SK-N-SH (cell line): ENCODE measurements at regions of chr20 and their contacts with region 1.

Region 1: DNA sequence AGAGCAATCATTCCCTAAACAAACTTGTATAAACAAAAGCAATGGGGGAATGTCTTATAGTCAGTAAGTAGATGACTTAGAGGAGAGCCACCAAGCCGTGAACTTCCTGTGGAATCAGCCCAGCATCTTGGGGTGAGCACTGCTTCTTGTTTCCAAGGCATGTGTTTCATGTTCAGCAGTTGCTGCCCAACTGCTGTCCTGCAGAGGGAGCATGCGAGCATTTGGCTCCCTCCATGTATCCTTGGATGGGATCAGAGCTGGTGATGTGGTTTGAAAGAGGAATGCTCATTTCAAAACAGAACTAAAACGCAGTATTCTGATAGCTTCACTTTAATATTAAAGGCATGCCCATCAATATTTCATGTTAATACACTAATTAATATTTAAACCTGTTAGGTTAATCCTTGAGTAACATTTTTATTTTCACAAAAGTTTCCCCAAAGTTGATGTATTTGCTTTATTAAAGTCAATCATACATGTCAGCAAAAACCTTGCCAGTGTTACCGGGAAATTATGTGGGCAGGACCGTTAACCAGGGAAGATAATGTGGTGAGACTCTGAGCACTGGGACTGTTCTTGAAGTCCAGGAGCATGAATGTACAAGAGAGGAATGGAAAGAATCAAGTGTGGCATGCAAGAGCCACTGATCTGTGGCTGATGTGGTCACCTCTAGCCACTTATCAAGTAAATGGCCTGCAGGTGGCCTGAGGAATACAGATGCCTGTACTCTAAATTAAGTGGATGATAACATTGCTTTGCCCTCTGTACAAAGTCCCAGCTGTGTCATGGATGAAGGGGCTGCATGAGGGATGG is 172.2 kb upstream of the GGTLC1 start:
- DNase-seq: peak; percentile 59
- H3K4me3 ChIP-seq: no peak overlapping the region
- H3K27ac ChIP-seq: no peak overlapping the region
- H3K4me1 ChIP-seq: no peaks in the 10 kb centered on the region
- H3K27me3 ChIP-seq: no peaks in the 10 kb centered on the region
- CTCF ChIP-seq: peak; percentile 73
- EP300 ChIP-seq: no peak
- RAD21 ChIP-seq: peak; percentile 65

Region 2: GRCh38 chr20:24086121-24086520 is 74.6 kb before region 1 on chr20:
- CTCF ChIA-PET with region 1: no interaction called
- POLR2A ChIA-PET with region 1: no interaction called
- DNase-seq: no peak
- H3K4me3 ChIP-seq: no peak overlapping the region
- H3K27ac ChIP-seq: no peak overlapping the region
- H3K4me1 ChIP-seq: no peaks in the 10 kb centered on the region
- H3K27me3 ChIP-seq: peaks cover 9% of the 10 kb centered on the region; the same call in 1 of the 2 replicates
- CTCF ChIP-seq: no peak
- EP300 ChIP-seq: no peak
- RAD21 ChIP-seq: no peak

Region 3: GRCh38 chr20:24149881-24150307 is 10.9 kb before region 1 on chr20:
- CTCF ChIA-PET with region 1: interaction called, 53 read pairs
- POLR2A ChIA-PET with region 1: no interaction called
- DNase-seq: peak; percentile 55
- H3K4me3 ChIP-seq: no peak overlapping the region
- H3K27ac ChIP-seq: no peak overlapping the region
- H3K4me1 ChIP-seq: no peaks in the 10 kb centered on the region
- H3K27me3 ChIP-seq: no peaks in the 10 kb centered on the region
- CTCF ChIP-seq: peak; percentile 50
- EP300 ChIP-seq: no peak
- RAD21 ChIP-seq: peak; percentile 40

Region 4: DNA sequence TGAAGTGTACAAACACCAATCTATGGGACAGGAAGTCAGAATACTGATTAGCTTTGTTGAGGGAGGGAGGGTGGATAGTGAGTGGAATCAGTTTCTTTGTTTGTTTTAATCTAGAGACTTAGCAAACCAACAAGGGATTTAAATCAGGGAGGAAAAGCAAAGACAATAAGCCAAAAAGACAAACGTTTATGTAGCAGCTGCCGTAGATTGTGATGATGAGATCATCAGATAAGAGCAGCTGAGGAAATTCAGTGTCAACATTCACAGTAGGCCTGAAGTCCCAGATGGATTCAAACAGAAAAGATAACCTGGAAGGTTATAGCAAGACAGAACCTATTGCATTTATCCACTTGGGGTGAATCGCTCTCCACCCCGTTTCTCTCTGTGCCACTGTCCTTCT is 203.7 kb after region 1 on chr20:
- CTCF ChIA-PET with region 1: no interaction called
- POLR2A ChIA-PET with region 1: no interaction called
- DNase-seq: no peak
- H3K4me3 ChIP-seq: no peak overlapping the region
- H3K27ac ChIP-seq: no peak overlapping the region
- H3K4me1 ChIP-seq: no peaks in the 10 kb centered on the region
- H3K27me3 ChIP-seq: no peaks in the 10 kb centered on the region
- CTCF ChIP-seq: no peak
- EP300 ChIP-seq: no peak
- RAD21 ChIP-seq: no peak

Region 5: DNA sequence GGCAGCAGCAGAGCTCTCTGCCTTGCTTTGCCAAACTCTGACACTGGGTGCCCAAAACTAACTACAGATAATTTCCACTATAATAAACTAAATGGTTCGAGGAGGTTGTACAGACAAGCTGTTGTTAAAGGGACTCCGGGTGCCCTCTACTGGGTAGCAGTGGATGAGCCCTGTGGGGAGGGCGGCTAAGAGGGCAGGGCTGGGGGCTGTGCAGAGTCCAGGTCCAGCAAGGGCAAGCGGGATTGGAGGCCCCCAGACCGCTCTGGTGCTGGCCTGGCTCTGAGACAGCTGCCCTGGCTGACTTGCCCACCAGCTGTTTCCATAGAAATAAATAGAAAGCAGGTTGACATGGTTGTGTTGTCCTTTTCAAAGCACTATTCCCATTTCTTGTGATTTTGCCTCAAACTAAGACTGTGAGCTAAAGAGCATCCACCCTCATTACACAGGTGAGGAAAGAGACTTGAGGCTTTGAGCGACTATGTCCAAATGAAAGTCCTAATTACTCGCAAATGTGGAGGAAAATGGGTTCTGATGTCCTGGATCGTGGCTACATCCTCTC is 620.7 kb after region 1 on chr20:
- CTCF ChIA-PET with region 1: interaction called, 12 read pairs
- POLR2A ChIA-PET with region 1: no interaction called
- DNase-seq: peak; percentile 71
- H3K4me3 ChIP-seq: no peak overlapping the region; a peak in 1 of 4 replicates
- H3K27ac ChIP-seq: no peak overlapping the region
- H3K4me1 ChIP-seq: peaks cover 0 to 7% of the 10 kb centered on the region in 2 experiments; a peak in 1 of 4 replicates
- H3K27me3 ChIP-seq: no peaks in the 10 kb centered on the region
- CTCF ChIP-seq: peak; percentile 63
- EP300 ChIP-seq: no peak
- RAD21 ChIP-seq: peak; percentile 73

Region 6: DNA sequence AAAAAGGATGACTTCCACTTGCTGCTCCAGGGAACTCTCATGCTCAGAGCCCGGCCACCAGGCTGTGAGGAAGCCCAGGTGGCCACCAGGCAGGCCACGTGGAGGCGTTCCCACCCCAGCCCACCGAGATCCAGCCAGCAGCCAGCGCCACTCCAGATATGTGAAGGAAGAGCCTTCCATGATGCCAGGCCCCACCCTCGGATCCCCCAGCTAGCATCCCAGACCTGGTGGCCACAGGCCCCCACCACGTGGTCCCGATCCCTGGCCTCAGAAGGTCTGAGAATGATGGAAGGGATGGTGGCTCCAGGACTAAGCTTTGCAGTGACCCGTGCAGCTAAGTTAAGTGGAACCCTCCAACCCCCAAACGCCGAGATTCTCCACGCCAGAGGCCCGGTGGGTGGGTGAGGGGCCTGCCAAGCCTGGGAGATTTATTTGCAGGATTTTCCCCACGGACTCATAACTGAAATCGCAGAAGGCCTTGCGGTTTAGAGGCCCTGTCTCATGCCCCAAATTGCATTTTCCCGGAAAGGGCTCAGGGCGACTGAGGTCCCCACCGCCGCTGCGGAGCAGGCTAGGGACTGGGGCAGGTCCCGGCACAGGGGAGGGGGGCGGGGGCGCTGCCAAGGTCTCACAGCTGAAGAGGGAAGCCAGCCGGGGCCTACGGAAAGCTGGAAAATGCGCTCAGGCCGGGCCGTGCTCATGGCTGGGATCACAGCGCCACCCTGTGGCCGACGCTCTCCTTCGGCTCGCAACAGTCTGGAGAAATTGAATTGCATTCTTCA is 757.2 kb after region 1 on chr20:
- CTCF ChIA-PET with region 1: interaction called, 43 read pairs
- POLR2A ChIA-PET with region 1: no interaction called
- DNase-seq: peak; percentile 85
- H3K4me3 ChIP-seq: no peak overlapping the region; a peak in 1 of 4 replicates
- H3K27ac ChIP-seq: no peak overlapping the region
- H3K4me1 ChIP-seq: no peaks in the 10 kb centered on the region
- H3K27me3 ChIP-seq: no peaks in the 10 kb centered on the region
- CTCF ChIP-seq: peak; percentile 87
- EP300 ChIP-seq: no peak
- RAD21 ChIP-seq: peak; percentile 92